Right ventricle myocardium superior (tissue), 1 donor: ENCODE measurements at regions of chr11 and their contacts with region 1.

Region 1: DNA sequence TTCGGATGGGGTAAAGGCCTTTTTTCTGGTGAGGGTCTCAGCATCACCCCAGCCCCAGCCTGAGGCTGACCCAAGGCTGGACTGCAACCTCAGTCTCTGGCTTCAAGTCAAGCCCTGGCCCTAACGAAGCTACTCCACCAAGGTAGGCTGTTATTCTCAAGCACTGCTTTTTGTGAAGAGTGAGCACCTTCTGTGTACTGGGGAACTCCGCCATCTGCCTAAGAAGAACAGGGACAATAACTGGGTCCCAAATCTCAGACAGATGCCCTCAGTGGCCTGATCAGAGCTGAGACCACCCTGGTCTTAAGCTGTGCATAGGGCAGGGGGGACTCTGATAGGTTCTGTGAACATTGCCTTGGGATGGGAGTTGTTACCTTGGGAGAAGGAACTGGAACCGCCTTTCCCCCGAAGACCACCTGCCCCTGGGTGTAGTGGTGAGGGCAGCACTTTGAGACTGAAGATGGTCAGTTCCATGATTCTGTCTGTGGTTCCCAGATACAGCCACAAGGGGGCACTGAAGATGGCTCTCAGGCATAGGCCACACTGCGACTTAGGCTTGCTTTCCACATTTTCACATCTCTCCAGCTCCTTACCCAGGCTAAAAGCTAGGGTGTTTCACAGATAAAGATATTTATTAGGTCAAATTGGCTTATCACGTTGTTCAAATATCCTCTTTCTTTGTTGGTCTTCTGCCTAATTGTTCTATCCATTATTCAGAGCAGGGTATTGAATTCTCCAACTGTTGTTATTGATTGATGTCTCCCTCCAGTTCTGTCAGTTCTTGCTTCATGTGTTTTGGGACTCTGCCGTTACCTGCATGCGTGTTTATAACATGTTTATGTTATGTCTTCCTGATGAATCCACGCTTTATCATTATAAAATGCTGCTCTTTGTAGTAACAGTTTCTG is 11.8 kb upstream of the UVRAG start:
- DNase-seq: peak; percentile 70
- ATAC-seq: peak; percentile 92

Region 2: DNA sequence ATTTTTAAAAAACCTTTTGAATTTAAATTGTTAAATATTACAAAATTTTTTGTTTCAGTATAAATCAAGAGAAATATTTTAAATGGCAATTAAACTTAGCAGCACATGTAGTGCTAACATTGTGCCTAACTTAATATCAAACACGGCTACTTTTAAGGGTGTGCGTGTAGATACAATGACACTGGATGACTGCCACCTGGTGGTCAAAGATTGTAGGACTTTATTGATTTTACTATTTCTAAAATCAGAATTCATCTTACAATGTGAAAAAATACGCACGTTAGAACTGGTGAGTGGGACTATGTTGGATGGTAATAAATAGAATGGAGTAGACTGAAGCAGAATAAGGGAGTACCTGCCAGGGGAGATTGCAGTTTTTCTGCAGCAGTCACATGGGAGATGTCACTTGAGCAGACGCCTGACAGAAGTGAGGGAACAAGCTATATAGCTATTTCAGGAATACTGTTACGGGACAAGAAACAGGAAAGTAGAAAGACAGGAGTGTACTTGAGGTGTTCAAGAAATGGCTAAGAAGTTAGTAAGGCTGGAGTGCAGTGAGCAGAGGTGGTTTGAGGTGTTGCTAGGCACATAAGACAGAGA is 64.7 kb after region 1 on chr11:
- intact Hi-C with region 1: loop called (anchors 2 kb)
- DNase-seq: no peak
- ATAC-seq: peak; percentile 81

Region 3: GRCh38 chr11:76152086-76152681 is 349.0 kb after region 1 on chr11:
- intact Hi-C with region 1: loop called (anchors 10 kb)
- DNase-seq: peak; percentile 95
- ATAC-seq: peak; percentile 93